Body of pancreas (tissue), 4 donors: ENCODE measurements at regions of chr6 and their contacts with region 1.

Region 1: GRCh38 chr6:12233693-12234571 is 56.2 kb upstream of the EDN1 start:
- DNase-seq: peak; percentile 43 to 70 (median 46)
- ATAC-seq: peak; percentile 81
- H3K4me3 ChIP-seq: no peak overlapping the region
- H3K27ac ChIP-seq: no peak overlapping the region
- H3K4me1 ChIP-seq: peaks cover 6% of the 10 kb centered on the region
- H3K27me3 ChIP-seq: no peaks in the 10 kb centered on the region
- CTCF ChIP-seq: peak; percentile 55 to 98 (median 96)
- POLR2A ChIP-seq: no peak

Region 2: GRCh38 chr6:11654876-11655275 is 579.1 kb before region 1 on chr6:
- intact Hi-C with region 1: loop called (anchors 5 kb)
- DNase-seq: no peak
- ATAC-seq: no peak
- H3K4me3 ChIP-seq: no peak overlapping the region
- H3K27ac ChIP-seq: no peak overlapping the region
- H3K4me1 ChIP-seq: peaks cover 10% of the 10 kb centered on the region
- H3K27me3 ChIP-seq: no peaks in the 10 kb centered on the region
- CTCF ChIP-seq: no peak
- POLR2A ChIP-seq: no peak

Region 3: GRCh38 chr6:12182676-12183075 is 51.3 kb before region 1 on chr6:
- intact Hi-C with region 1: no loop called
- DNase-seq: no peak
- ATAC-seq: no peak
- H3K4me3 ChIP-seq: no peak overlapping the region
- H3K27ac ChIP-seq: no peak overlapping the region
- H3K4me1 ChIP-seq: no peaks in the 10 kb centered on the region
- H3K27me3 ChIP-seq: no peaks in the 10 kb centered on the region
- CTCF ChIP-seq: no peak
- POLR2A ChIP-seq: no peak